ENCODE measurements at regions of chr5 and their contacts with region 1.

Region 1: GRCh38 chr5:157471709-157472108 is 11.7 kb downstream of the NIPAL4 start:
- DNase-seq: no peak
- H3K4me3 ChIP-seq: no peak overlapping the region
- H3K27ac ChIP-seq: no peak overlapping the region
- H3K4me1 ChIP-seq: no peaks in the 10 kb centered on the region
- H3K27me3 ChIP-seq: no peaks in the 10 kb centered on the region
- CTCF ChIP-seq: peak; percentile 40 to 76 (median 74)
- EP300 ChIP-seq: no peak
- POLR2A ChIP-seq: no peak
- RAD21 ChIP-seq: peak; percentile 55 to 71

Region 2: DNA sequence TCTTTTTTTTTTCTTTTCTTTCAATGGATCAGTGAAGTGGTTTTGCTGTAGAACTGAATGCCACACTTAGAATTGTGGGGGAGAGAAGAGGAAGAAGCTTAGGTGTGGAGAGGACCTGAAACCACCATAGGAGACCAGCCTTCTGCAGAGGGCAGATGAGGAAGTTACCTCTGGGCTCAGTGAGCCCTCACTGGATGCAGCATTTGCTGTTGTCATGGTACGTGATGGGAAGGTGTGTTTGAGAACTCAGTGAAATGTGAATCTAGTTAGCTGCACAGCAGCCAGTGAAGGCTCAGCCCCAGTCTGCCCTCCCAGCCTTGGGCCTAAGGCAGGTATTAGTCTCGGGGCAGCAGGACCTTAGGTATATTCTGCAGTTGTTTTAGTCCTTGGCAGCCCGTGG is 188.3 kb before region 1 on chr5:
- CTCF ChIA-PET with region 1: no interaction called
- POLR2A ChIA-PET with region 1: no interaction called
- DNase-seq: no peak
- H3K4me3 ChIP-seq: no peak overlapping the region
- H3K27ac ChIP-seq: no peak overlapping the region
- H3K4me1 ChIP-seq: no peaks in the 10 kb centered on the region; a peak in 3 of 7 replicates
- H3K27me3 ChIP-seq: no peaks in the 10 kb centered on the region
- CTCF ChIP-seq: no peak
- EP300 ChIP-seq: no peak
- POLR2A ChIP-seq: no peak
- RAD21 ChIP-seq: no peak

Region 3: DNA sequence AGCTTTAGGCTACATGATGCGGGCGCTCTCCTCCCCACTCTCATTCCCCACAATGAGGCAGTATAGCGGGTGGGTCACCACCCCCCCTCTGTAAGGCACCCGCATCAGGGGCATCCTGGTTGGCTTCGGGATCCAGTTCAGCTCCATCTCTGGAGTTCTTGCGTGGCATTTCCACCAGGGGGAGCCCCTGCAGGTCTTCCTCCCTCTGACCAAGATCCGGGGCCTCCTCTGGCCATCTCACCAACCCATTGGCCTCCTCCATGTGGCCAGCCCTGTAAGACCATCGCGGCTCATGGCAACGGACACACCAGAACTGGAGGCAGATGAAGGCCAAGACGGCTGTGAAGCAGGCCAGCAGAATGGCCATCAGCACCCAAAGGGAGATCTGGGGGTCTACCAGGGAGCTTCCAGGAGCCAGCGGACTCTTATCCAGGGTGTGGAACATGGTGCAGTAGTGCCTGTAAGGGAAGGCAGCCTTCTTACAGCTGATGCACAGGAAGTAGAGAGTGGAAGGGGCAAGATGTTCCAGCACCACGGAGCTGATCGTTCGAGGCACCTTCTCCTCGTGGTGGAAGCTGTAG is 128.8 kb before region 1 on chr5:
- CTCF ChIA-PET with region 1: interaction called, 40 read pairs
- POLR2A ChIA-PET with region 1: no interaction called
- DNase-seq: peak in 1 of 2 experiments; percentile 82
- H3K4me3 ChIP-seq: no peak overlapping the region
- H3K27ac ChIP-seq: no peak overlapping the region
- H3K4me1 ChIP-seq: no peaks in the 10 kb centered on the region
- H3K27me3 ChIP-seq: no peaks in the 10 kb centered on the region
- CTCF ChIP-seq: peak; percentile 69 to 77 (median 72)
- EP300 ChIP-seq: no peak
- POLR2A ChIP-seq: no peak
- RAD21 ChIP-seq: peak; percentile 29 to 52; a peak in 3 of 4 replicates

Region 4: DNA sequence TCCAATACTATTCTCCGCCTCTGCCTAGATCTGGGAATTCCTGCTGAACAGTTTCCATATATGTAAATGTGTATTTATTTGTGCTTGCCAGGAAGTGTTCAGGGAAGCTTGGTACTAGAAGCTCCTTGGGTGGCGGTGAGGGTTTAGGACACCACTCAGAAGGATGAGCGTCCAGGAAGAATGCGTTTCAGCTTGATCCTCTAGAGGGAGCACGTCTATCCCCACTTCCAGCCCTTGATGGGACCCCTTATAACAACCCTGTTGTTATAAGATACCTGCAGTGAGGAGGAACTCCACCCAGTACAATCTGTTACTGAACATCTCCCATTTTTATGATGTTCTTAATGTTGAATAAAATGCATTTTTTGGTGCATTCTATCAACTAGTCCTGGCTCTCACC is 116.9 kb before region 1 on chr5:
- CTCF ChIA-PET with region 1: interaction called, 55 read pairs
- POLR2A ChIA-PET with region 1: interaction called, 3 read pairs
- DNase-seq: peak in 1 of 2 experiments; percentile 62
- H3K4me3 ChIP-seq: no peak overlapping the region
- H3K27ac ChIP-seq: no peak overlapping the region
- H3K4me1 ChIP-seq: no peaks in the 10 kb centered on the region
- H3K27me3 ChIP-seq: no peaks in the 10 kb centered on the region
- CTCF ChIP-seq: peak; percentile 52 to 79 (median 58)
- EP300 ChIP-seq: no peak
- POLR2A ChIP-seq: no peak
- RAD21 ChIP-seq: peak; percentile 19 to 43; a peak in 2 of 4 replicates

Region 5: DNA sequence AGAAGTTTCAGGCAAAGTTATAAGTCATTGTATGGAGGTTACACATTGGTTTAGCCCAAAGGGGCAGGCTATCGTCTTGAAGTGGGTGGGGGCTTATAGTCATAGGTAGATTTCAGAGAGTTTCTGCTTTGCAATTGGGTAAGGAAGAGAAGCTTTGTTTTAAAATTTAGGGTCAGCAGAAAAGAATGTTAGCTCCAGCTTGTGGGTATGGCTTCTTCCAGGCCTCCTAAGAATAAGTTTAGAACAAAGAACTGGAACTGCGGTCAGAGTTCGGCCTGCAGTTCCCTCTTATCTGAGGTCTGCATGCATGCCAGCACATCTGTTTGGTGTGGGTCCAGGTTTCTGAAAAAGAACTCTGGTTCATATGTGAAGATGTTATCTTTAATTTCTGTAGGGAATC is 109.7 kb before region 1 on chr5:
- CTCF ChIA-PET with region 1: interaction called, 55 read pairs
- POLR2A ChIA-PET with region 1: no interaction called
- DNase-seq: no peak
- H3K4me3 ChIP-seq: no peak overlapping the region
- H3K27ac ChIP-seq: no peak overlapping the region
- H3K4me1 ChIP-seq: no peaks in the 10 kb centered on the region
- H3K27me3 ChIP-seq: no peaks in the 10 kb centered on the region; a peak in 1 of 7 replicates
- CTCF ChIP-seq: no peak
- EP300 ChIP-seq: no peak
- POLR2A ChIP-seq: no peak
- RAD21 ChIP-seq: no peak

Region 6: GRCh38 chr5:157449011-157449723 is 22.5 kb before region 1 on chr5:
- CTCF ChIA-PET with region 1: interaction called, 66 read pairs
- POLR2A ChIA-PET with region 1: interaction called, 3 read pairs
- DNase-seq: peak in 1 of 2 experiments; percentile 22
- H3K4me3 ChIP-seq: no peak overlapping the region
- H3K27ac ChIP-seq: no peak overlapping the region
- H3K4me1 ChIP-seq: no peaks in the 10 kb centered on the region
- H3K27me3 ChIP-seq: no peaks in the 10 kb centered on the region
- CTCF ChIP-seq: no peak
- EP300 ChIP-seq: no peak
- POLR2A ChIP-seq: no peak
- RAD21 ChIP-seq: no peak